ENCODE measurements at regions of chr1 and their contacts with region 1.

Region 1: GRCh38 chr1:10867138-10867721 is 70.8 kb upstream of the CASZ1 start:
- DNase-seq: peak; percentile 78 to 93 (median 88)
- ATAC-seq: peak; percentile 97
- H3K4me3 ChIP-seq: peak overlapping the region; percentile 31; the same call in 1 of the 2 replicates
- H3K27ac ChIP-seq: no peak overlapping the region
- H3K4me1 ChIP-seq: peaks cover 0 to 13% of the 10 kb centered on the region in 2 experiments; a peak in 3 of 5 replicates
- H3K27me3 ChIP-seq: peaks cover 40 to 64% of the 10 kb centered on the region in 2 experiments
- CTCF ChIP-seq: peak; percentile 60 to 86 (median 80); a peak in 5 of 6 replicates
- EP300 ChIP-seq: no peak
- POLR2A ChIP-seq: no peak
- RAD21 ChIP-seq: peak; percentile 60 to 84

Region 2: DNA sequence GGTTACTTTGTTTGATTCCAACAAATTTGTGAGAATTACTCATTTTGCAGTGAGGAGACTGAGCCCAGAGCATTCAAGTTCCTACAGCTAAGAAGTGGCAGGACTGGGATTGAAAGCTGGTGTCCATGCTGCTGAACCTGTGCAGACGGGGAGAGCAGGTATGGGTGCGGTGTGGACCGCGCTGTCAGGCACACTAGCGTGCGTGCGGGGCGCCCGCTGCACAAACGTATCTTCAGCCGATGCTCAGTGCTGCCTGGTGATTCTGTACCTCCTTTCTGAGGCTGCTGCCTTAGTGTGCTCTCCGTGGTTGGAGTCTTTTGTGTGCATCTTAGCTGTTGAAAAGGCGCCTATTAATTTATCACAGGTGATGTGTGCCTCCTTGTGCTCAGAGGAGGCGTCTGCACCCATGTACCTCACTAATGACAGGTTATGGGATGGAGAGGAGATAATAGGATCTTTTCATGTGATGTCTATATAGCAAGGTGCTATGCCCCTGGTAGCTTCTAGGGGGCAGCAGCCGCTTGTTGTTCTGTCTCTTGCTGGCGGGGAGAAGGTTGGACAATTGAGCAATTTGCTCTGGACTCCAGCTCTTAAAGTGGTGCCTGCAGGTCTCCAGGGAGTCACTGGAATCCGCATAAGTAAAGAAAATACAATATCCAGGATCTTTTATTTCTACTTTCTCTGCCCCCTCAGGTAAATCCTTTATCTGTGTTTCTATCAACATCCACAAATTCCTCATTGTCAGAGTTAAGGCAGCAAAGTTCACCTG is 359.9 kb before region 1 on chr1:
- CTCF ChIA-PET with region 1: interaction called, 15 read pairs
- POLR2A ChIA-PET with region 1: no interaction called
- in situ Hi-C with region 1: loop called (anchors 5 kb)
- intact Hi-C with region 1: loop called (anchors 1 kb)
- DNase-seq: peak; percentile 63 to 82 (median 74)
- ATAC-seq: peak; percentile 83
- H3K4me3 ChIP-seq: no peak overlapping the region
- H3K27ac ChIP-seq: no peak overlapping the region
- H3K4me1 ChIP-seq: peaks cover 24 to 30% of the 10 kb centered on the region in 2 experiments
- H3K27me3 ChIP-seq: no peaks in the 10 kb centered on the region
- CTCF ChIP-seq: peak; percentile 90 to 98 (median 97)
- EP300 ChIP-seq: no peak
- POLR2A ChIP-seq: no peak
- RAD21 ChIP-seq: peak; percentile 87 to 95

Region 3: DNA sequence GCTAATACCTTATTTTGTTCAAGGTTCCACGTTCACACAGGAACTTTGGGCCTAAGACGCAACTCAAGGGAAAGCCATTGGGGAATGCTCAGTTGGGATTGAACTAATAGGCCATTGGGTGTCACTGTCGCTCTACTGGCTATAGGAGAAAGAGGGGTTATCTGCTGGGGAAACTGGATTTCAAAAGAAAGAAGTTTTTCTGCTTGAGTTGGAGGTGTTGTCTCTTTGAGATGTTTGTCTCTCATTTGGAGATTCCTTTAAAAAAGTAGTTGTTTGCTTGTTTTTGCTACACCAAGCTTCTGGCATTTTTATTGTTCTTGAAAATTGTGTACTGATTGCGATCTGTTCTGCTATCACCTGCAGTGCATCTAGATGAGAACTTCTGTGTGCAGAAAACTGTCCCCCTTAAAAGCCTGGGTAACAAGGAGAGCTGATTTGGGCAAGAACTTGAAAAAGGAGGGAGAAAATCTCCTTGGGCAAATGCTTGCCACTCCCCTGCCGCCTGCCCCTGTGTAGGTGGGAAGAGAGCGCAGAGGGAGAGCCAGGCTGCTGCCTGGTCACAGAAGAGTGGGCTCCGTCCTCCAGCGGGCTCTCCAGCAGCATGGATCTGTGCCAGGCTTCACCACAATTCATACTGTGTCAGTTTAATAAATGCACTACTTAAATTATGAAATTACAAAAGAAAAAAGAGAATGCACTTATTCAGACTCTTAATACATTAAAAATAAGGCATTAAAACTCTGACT is 352.6 kb before region 1 on chr1:
- CTCF ChIA-PET with region 1: interaction called, 6 read pairs
- POLR2A ChIA-PET with region 1: no interaction called
- in situ Hi-C with region 1: loop called (anchors 5 kb)
- intact Hi-C with region 1: loop called (anchors 1 kb)
- DNase-seq: peak; percentile 45 to 65 (median 48)
- ATAC-seq: peak; percentile 54
- H3K4me3 ChIP-seq: no peak overlapping the region
- H3K27ac ChIP-seq: no peak overlapping the region
- H3K4me1 ChIP-seq: peaks cover 23 to 28% of the 10 kb centered on the region in 2 experiments; a peak in 4 of 5 replicates
- H3K27me3 ChIP-seq: no peaks in the 10 kb centered on the region
- CTCF ChIP-seq: peak; percentile 58 to 84 (median 64)
- EP300 ChIP-seq: no peak
- POLR2A ChIP-seq: no peak
- RAD21 ChIP-seq: peak; percentile 76 to 87

Region 4: GRCh38 chr1:10598389-10598702 is 268.9 kb before region 1 on chr1:
- CTCF ChIA-PET with region 1: no interaction called
- POLR2A ChIA-PET with region 1: no interaction called
- in situ Hi-C with region 1: loop called (anchors 10 kb)
- intact Hi-C with region 1: no loop called
- DNase-seq: no peak
- ATAC-seq: no peak
- H3K4me3 ChIP-seq: no peak overlapping the region
- H3K27ac ChIP-seq: no peak overlapping the region
- H3K4me1 ChIP-seq: no peaks in the 10 kb centered on the region
- H3K27me3 ChIP-seq: no peaks in the 10 kb centered on the region
- CTCF ChIP-seq: 0 out of 6 replicates have a peak, but pooled peaks of 1 of the 3 experiments have one; percentile 2
- EP300 ChIP-seq: no peak
- POLR2A ChIP-seq: no peak
- RAD21 ChIP-seq: no peak

Region 5: DNA sequence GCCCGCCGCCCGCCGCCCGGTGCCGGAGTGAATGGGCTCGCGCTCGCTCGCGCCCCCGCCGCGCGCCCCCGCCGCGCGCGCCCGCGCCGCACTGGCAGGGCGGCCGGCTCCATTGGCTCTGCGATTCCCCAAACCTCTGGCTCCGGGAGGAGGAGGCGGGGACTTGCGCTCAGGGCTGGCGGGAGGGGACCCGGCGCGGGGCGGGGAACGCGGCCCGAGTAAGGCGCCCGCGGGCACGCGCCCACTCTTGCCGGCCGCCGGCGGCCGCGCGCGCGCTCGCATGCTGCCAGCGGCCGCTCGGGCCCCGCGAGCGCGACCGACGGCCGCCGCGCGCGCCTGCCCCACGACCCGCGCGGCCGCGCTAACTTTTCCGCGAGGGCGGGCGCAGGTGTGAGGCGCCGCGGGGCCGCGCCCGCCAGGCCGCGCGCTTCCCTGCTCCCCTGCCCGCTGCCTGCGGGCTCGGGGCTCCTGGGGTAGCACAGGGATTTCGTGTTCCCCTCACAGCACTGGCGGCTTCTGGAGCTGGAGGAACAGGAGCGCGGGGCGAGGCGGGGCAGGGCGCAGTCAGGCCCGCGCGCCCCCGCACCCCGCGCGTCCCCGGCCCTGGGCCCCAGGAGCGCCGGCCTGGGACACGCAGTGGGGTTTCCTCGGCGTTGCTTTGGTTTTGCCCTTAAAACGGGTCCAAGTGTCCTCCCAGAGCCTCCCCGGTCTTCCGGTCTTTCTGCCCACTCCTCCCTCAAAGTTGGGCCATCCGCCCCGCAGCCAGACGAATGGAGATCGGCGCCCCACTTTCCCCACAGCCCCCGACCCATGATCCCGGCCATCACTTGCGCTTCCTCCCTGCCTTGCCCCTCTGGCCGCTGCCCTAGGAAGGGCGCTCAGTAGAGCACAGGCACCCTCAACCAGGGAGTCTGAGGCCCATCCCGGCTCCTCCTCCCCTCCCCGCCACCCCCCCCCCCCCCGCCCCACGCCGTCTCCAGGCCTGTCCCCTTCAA is 172.3 kb before region 1 on chr1:
- CTCF ChIA-PET with region 1: no interaction called
- POLR2A ChIA-PET with region 1: no interaction called
- in situ Hi-C with region 1: no loop called
- intact Hi-C with region 1: loop called (anchors 10 kb)
- DNase-seq: peak; percentile 91 to 98 (median 96)
- ATAC-seq: peak; percentile 77
- H3K4me3 ChIP-seq: peak overlapping the region; percentile 39
- H3K27ac ChIP-seq: no peak overlapping the region
- H3K4me1 ChIP-seq: peaks cover 3 to 48% of the 10 kb centered on the region in 2 experiments; a peak in 3 of 5 replicates
- H3K27me3 ChIP-seq: peaks cover 38 to 39% of the 10 kb centered on the region in 2 experiments; a peak in 4 of 5 replicates
- CTCF ChIP-seq: no peak
- EP300 ChIP-seq: no peak
- POLR2A ChIP-seq: no peak
- RAD21 ChIP-seq: no peak

Region 6: DNA sequence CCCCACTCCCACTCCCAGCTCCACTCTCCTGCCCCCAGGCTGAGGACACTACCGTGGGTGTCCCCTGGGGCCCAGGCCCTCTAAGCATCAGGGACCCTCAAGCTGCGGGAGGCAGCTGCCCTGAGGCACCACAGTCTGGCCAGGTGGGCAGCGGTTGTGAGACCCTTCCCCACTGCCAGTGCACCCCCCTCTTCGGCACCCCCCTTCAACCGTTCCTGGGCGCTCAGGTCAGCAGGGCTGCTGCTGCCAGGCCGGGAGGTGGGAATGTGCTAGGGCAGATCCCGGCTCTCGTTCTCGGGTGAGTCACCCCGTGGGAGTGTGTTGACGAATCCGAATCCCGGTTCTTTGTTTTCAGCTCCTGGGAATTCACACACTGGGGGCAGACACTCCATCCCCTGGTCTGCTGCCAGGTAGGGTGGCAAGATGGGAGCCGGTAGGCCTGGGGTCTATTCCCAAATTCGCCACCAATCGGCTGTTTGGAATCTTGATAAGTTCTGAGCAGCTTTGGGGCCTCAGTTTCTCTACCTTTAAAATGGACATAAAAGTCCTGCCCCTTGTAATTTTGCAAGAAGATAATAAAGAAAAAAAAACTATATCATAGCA is 42.3 kb before region 1 on chr1:
- CTCF ChIA-PET with region 1: no interaction called
- POLR2A ChIA-PET with region 1: no interaction called
- in situ Hi-C with region 1: no loop called
- intact Hi-C with region 1: loop called (anchors 5 kb)
- DNase-seq: no peak
- ATAC-seq: no peak
- H3K4me3 ChIP-seq: no peak overlapping the region
- H3K27ac ChIP-seq: no peak overlapping the region
- H3K4me1 ChIP-seq: peaks cover 0 to 11% of the 10 kb centered on the region in 2 experiments; a peak in 2 of 5 replicates
- H3K27me3 ChIP-seq: peaks cover 66 to 88% of the 10 kb centered on the region in 2 experiments
- CTCF ChIP-seq: no peak
- EP300 ChIP-seq: no peak
- POLR2A ChIP-seq: no peak
- RAD21 ChIP-seq: no peak

Region 7: DNA sequence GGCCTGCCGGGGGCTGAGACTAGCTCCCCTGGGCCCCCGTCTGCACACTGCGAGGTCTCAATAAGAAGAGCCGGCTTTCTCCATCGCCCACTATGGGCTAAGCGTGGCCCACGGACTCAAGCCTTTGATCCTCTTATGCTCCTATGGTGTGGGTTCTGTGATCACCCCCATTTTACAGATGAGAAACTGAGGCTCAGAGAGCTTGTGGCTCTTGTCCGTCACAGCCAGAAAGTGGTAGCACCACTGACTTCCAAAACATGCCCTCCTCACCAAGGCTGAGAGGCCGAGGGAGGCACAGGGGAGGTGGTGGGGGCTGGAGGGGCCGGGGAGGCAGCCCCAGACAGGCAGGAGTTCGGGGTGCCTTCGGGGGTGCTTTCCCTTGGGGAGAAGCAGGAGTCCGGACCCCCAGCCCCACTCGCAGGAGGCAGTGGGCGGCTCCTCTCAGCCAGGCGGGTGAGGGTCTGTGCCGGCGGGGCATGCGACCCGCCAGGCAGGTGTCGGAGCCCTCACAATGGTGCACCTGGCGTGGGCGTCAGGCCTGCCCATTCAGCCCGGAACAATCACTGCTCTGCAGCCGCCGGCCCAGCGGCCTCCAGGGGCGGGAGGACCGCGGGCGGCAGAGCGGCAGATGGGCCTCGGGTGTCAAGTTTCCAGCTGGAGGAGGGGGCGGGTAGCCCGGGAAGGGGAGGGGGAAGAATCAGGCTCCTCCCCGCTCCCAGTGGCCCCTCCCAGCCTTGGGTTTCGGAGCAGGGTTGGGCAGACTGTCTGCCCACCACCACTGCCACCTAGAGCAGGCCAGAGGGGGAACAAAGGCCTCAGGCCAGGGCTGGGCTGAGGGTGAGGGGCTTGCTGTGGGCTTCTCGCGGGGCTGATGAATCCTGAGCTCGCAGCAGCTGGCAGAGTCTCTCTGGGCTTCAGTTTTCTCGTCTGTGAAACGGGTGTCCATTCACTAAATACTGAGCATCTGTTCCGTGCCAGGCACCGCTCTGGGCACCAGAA is 31.5 kb before region 1 on chr1:
- CTCF ChIA-PET with region 1: no interaction called
- POLR2A ChIA-PET with region 1: no interaction called
- in situ Hi-C with region 1: no loop called
- intact Hi-C with region 1: no loop called
- DNase-seq: peak; percentile 76 to 96 (median 94)
- ATAC-seq: peak; percentile 99
- H3K4me3 ChIP-seq: no peak overlapping the region
- H3K27ac ChIP-seq: no peak overlapping the region
- H3K4me1 ChIP-seq: peaks cover 0 to 11% of the 10 kb centered on the region in 2 experiments; a peak in 3 of 5 replicates
- H3K27me3 ChIP-seq: peaks cover 20 to 74% of the 10 kb centered on the region in 2 experiments
- CTCF ChIP-seq: peak in 1 of 3 experiments; percentile 11; a peak in 1 of 6 replicates
- EP300 ChIP-seq: no peak
- POLR2A ChIP-seq: no peak
- RAD21 ChIP-seq: no peak